IMR-90 (cell line): ENCODE measurements at regions of chr1 and their contacts with region 1.

Region 1: GRCh38 chr1:95154096-95154495 is 36.9 kb downstream of the TLCD4 start:
- DNase-seq: no peak
- ATAC-seq: no peak
- H3K4me3 ChIP-seq: no peak overlapping the region
- H3K27ac ChIP-seq: no peak overlapping the region
- H3K4me1 ChIP-seq: no peaks in the 10 kb centered on the region
- H3K27me3 ChIP-seq: no peaks in the 10 kb centered on the region; the same call in 1 of the 2 replicates
- CTCF ChIP-seq: no peak
- POLR2A ChIP-seq: no peak
- RAD21 ChIP-seq: no peak

Region 2: DNA sequence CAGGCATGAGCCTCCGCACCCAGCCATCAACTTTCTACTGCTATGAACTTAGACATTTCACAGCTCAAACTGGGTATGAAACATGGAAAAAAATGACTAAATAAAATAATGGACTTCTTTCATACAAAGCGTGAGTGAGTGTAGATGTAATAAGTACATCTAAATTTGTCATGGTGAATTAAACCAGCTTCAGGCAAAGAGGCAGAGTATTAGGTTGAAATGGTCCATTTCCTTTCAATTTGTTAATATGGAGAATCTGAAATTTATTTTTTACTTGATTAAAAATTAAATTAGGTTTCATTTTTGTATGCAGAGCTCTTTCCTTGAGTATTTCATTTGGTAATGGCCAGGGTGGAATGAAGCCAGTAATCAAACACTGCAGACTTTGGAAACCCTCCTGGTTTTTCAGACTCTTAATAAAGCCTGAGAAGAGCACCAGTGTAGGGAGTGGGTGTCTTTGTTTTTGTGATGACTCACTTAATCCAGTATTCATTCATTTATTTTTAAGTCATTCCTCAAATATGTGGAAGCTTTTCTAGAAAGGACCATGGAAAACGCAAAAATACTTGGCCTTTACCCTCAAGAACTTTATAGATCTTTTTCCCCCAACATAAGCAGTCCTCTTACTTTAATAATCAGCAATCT is 130.6 kb before region 1 on chr1:
- CTCF ChIA-PET with region 1: no interaction called
- POLR2A ChIA-PET with region 1: no interaction called
- dilution Hi-C with region 1: no loop called
- in situ Hi-C with region 1: no loop called
- intact Hi-C with region 1: no loop called
- DNase-seq: peak; percentile 96
- ATAC-seq: peak; percentile 81
- H3K4me3 ChIP-seq: no peak overlapping the region
- H3K27ac ChIP-seq: peak overlapping the region; percentile 76; the same call in 1 of the 2 replicates
- H3K4me1 ChIP-seq: peaks cover 18% of the 10 kb centered on the region
- H3K27me3 ChIP-seq: no peaks in the 10 kb centered on the region
- CTCF ChIP-seq: no peak
- POLR2A ChIP-seq: no peak
- RAD21 ChIP-seq: no peak

Region 3: DNA sequence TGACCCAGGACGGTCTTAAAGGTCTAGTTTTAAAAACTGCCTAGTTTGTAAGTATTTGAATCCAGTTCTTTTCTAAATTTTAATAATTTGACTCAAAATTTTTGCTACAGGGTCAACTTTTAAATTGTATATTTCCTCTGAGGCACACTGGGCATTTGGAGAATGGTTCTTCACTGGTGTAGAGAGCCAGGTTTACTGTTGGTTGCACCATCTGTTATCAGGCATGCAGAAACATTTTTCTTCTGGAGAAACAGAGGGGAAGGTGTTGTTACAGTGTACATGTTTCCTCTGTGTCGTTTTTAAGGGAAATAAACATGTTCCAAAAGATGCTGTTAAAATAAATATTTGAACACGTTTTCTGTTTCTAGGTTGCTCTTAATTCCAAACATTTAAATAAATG is 41.0 kb after region 1 on chr1:
- CTCF ChIA-PET with region 1: no interaction called
- POLR2A ChIA-PET with region 1: interaction called, 15 read pairs
- dilution Hi-C with region 1: no loop called
- in situ Hi-C with region 1: no loop called
- intact Hi-C with region 1: no loop called
- DNase-seq: no peak
- ATAC-seq: no peak
- H3K4me3 ChIP-seq: no peak overlapping the region
- H3K27ac ChIP-seq: no peak overlapping the region
- H3K4me1 ChIP-seq: no peaks in the 10 kb centered on the region; the same call in 1 of the 2 replicates
- H3K27me3 ChIP-seq: no peaks in the 10 kb centered on the region
- CTCF ChIP-seq: no peak
- POLR2A ChIP-seq: no peak
- RAD21 ChIP-seq: no peak

Region 4: GRCh38 chr1:95236784-95237575 is 82.9 kb after region 1 on chr1:
- CTCF ChIA-PET with region 1: no interaction called
- POLR2A ChIA-PET with region 1: no interaction called
- dilution Hi-C with region 1: no loop called
- in situ Hi-C with region 1: no loop called
- intact Hi-C with region 1: no loop called
- DNase-seq: peak; percentile 47
- ATAC-seq: peak; percentile 12
- H3K4me3 ChIP-seq: no peak overlapping the region
- H3K27ac ChIP-seq: peak overlapping the region; percentile 14; the same call in 1 of the 2 replicates
- H3K4me1 ChIP-seq: peaks cover 6% of the 10 kb centered on the region
- H3K27me3 ChIP-seq: no peaks in the 10 kb centered on the region
- CTCF ChIP-seq: no peak
- POLR2A ChIP-seq: no peak
- RAD21 ChIP-seq: no peak